PC-3 (cell line): ENCODE measurements at regions of chr12 and their contacts with region 1.

Region 1: DNA sequence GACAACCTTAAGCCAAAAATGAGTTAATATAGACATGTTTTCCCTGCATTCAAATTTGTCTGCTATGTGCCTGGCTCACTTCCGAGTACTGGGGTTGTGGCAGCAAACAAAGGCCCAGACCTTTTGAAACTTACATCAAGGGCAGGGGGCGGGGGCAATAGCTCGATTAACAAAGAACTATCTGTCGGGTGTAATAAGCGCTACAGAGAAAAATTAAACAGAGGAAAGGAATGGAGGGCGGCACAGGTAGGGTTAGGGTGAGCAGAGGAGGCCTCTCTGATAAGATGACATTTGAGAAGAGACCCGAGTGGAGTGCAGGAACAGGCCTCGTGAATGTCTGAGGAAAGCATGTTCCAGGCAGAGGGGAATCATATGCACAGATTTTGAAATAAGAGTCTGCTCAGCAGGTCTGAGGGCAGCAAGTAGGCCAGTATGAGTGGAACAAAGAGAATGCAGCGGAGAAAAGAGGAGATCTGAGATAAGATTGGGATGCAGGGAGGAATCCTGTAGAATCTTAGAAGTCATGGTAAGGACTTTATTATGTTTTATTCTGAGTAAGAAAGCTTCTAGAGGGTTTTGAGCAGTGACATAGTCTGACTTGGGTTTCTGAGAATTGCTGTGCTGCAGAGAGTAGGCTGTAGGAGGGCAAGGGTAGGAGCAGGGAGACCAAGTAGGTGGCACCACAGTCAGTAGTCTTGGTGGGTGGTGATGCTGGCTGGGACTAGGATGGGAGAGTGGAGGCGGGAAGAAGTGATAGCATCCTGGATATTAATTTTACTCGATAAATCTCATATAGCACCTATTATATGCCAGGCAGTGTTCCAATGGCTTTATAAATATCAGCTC is 52.6 kb downstream of the BICDL1 start:
- DNase-seq: no peak
- ATAC-seq: no peak
- H3K4me3 ChIP-seq: no peak overlapping the region
- H3K27ac ChIP-seq: no peak overlapping the region
- H3K4me1 ChIP-seq: no peaks in the 10 kb centered on the region
- H3K27me3 ChIP-seq: no peaks in the 10 kb centered on the region
- CTCF ChIP-seq: no peak

Region 2: GRCh38 chr12:120056739-120057138 is 15.1 kb after region 1 on chr12:
- CTCF ChIA-PET with region 1: interaction called, 16 read pairs
- POLR2A ChIA-PET with region 1: no interaction called
- intact Hi-C with region 1: no loop called
- DNase-seq: no peak
- ATAC-seq: no peak
- H3K4me3 ChIP-seq: no peak overlapping the region
- H3K27ac ChIP-seq: no peak overlapping the region
- H3K4me1 ChIP-seq: no peaks in the 10 kb centered on the region
- H3K27me3 ChIP-seq: no peaks in the 10 kb centered on the region
- CTCF ChIP-seq: no peak